ENCODE measurements at regions of chr4 and their contacts with region 1.

Region 1: GRCh38 chr4:26069218-26069617 is 155.2 kb downstream of the SMIM20 start:
- DNase-seq: no peak
- H3K4me3 Mint-ChIP-seq: no peak overlapping the region
- H3K27ac Mint-ChIP-seq: no peak overlapping the region
- H3K4me1 Mint-ChIP-seq: peaks cover 22% of the 10 kb centered on the region
- H3K27me3 Mint-ChIP-seq: peaks cover 4% of the 10 kb centered on the region

Region 2: GRCh38 chr4:26325191-26325590 is 256.0 kb after region 1 on chr4:
- CTCF ChIA-PET with region 1: interaction called, 11 read pairs
- intact Hi-C with region 1: loop called (anchors 1 kb)
- DNase-seq: peak; percentile 46
- H3K4me3 Mint-ChIP-seq: peak overlapping the region; percentile 31
- H3K27ac Mint-ChIP-seq: no peak overlapping the region
- H3K4me1 Mint-ChIP-seq: peaks cover 39% of the 10 kb centered on the region
- H3K27me3 Mint-ChIP-seq: no peaks in the 10 kb centered on the region

Region 3: GRCh38 chr4:26568446-26568994 is 499.3 kb after region 1 on chr4:
- CTCF ChIA-PET with region 1: no interaction called
- intact Hi-C with region 1: no loop called
- DNase-seq: no peak
- H3K4me3 Mint-ChIP-seq: no peak overlapping the region
- H3K27ac Mint-ChIP-seq: peak overlapping the region; percentile 5
- H3K4me1 Mint-ChIP-seq: peaks cover 21% of the 10 kb centered on the region
- H3K27me3 Mint-ChIP-seq: peaks cover 12% of the 10 kb centered on the region